AG04449 (cell line): ENCODE measurements at regions of chr1 and their contacts with region 1.

Region 1: DNA sequence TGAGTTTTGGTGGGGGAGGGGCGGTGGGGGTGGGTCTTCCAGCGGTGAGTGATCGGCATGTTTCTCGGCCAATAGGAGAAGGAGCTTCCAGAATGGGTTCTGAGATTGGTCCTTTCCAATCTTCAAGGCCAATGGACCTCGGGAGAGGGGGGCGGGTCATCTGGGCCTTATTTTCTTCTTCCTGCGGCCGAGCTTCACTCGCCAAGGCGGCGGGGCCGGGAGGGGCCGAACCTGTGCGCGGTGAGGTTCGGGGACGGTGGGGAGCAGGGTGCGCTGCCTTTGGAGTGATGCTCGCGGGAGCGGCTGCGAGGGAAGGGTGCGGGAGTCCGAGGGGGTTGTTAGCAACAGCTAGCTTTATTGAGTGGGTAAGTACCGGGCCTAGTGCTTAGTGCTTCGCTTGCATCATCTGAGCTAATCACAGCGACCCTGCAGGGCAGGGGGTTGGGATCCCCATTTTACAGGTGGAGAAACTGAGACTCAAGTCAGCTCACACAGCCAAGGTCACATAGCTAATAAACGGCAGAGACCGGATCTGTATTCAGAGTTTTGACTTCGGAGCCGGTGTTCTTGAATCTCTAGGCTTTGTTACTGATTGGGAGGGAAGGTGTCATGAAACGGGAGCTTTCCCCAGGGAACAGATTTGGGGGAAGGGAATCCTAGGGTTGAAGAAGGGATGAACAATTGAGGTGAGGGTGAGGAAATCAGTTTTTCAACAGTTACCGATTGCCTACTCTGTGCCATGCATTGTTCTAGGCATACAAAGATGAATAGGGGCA is 549 bp downstream of the KDM4A start:
- DNase-seq: peak; percentile 94
- H3K4me3 ChIP-seq: peak overlapping the region; percentile 99
- CTCF ChIP-seq: no peak

Region 2: DNA sequence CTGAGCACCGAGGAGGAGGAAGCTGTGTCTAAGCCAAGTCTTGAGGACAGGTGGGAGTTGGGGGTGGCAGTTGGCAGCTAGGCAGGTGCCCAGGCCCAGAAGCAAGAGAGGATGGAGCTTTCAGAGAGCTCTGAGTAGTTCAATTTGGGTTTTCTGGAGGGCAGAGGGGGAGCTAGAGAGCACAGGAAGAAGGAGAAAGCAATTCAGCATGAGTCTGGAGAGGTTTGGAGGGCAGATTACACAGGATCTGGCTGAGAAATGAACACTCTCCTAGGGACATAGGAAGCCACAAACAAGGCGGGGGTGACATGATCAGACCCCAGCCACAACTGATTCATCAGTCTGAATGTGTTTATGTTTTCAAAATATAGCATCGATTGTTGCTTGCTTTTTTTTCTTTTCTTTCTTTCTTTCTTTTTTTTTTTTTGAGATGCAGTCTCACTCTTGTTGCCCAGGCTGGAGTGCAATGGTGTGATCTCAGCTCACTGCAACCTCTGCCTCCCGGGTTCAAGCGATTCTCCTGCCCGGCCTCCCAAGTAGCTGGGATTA is 96.0 kb before region 1 on chr1:
- CTCF ChIA-PET with region 1: interaction called, 15 read pairs
- POLR2A ChIA-PET with region 1: interaction called, 5 read pairs
- DNase-seq: no peak
- H3K4me3 ChIP-seq: no peak overlapping the region
- CTCF ChIP-seq: peak; percentile 67

Region 3: DNA sequence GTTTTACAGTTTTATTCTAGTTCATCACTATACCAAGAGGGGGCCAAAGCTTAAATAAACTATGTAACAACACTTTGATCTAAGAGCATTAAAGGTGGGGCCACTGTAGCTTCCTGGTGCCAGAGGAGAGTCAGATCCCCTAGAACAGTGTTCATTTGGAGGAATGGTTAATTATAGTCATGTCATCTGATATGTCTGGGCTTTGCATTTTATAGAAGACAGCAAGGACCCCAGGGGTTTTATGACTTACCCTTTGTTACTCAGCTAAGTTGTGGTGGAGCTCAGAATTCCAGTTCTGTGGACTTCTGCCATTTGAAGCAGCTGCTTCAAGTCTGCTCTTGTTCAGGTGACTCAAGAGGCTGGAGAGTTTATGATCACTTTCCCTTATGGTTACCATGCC is 16.1 kb after region 1 on chr1:
- CTCF ChIA-PET with region 1: interaction called, 13 read pairs
- POLR2A ChIA-PET with region 1: interaction called, 13 read pairs
- DNase-seq: no peak
- H3K4me3 ChIP-seq: no peak overlapping the region
- CTCF ChIP-seq: no peak

Region 4: GRCh38 chr1:43671626-43672330 is 21.3 kb after region 1 on chr1:
- CTCF ChIA-PET with region 1: interaction called, 13 read pairs
- POLR2A ChIA-PET with region 1: interaction called, 13 read pairs
- DNase-seq: peak; percentile 41
- H3K4me3 ChIP-seq: no peak overlapping the region
- CTCF ChIP-seq: no peak

Region 5: GRCh38 chr1:43688594-43689000 is 38.1 kb after region 1 on chr1:
- CTCF ChIA-PET with region 1: no interaction called
- POLR2A ChIA-PET with region 1: interaction called, 11 read pairs
- DNase-seq: no peak
- H3K4me3 ChIP-seq: no peak overlapping the region
- CTCF ChIP-seq: no peak